PC-3 (cell line): ENCODE measurements at regions of chr2 and their contacts with region 1.

Region 1: GRCh38 chr2:109173311-109174171 is 44.5 kb downstream of the SH3RF3 start:
- DNase-seq: no peak
- ATAC-seq: no peak
- H3K4me3 ChIP-seq: no peak overlapping the region
- H3K27ac ChIP-seq: peak overlapping the region; percentile 78; the same call in 1 of the 2 replicates
- H3K4me1 ChIP-seq: peaks cover 61% of the 10 kb centered on the region
- H3K27me3 ChIP-seq: no peaks in the 10 kb centered on the region
- CTCF ChIP-seq: no peak

Region 2: DNA sequence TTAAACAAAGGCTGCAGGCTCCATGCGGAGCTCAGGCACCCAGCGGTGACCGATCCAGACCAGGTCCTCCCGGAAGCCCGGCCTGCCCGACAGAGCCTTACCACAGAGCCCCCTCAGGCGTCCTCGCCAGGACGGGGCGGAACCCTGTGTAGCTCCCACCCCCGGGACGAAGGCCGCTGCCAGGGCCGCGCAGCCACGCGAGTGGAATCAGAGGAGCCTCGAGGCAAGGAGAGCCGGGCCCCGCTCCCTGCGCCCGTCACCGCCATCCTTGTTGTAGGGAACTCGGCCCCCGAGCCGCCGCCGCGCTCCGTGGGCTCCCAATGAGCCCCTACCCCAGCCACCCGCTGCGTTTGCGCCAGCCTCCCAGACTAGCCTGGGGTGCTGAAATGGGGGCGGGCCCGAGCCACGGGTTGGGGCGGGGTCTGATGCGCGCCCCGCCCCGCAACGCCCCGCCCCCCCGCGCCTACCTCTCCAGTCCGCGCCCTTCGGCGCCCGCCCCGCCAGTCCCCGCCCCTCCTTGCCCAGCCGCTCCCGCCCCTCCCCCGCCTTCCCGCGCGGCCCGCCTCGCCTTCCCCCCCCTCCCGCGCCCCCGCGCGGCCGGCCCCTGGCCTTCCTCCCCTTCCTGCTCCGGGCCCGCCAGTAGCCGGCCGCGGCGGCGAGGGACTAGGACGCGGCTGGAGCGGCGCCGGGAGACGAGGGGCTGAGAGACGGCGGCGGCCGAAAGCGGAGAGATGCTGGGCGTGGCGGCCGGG is 639.5 kb before region 1 on chr2 and contains the start of gene LIMS1:
- CTCF ChIA-PET with region 1: no interaction called
- POLR2A ChIA-PET with region 1: no interaction called
- intact Hi-C with region 1: no loop called
- DNase-seq: peak; percentile 91
- ATAC-seq: peak; percentile 81
- H3K4me3 ChIP-seq: peak within 1 kb of the TSS; percentile 85
- H3K27ac ChIP-seq: peak within 1 kb of the TSS; percentile 86
- H3K4me1 ChIP-seq: peaks cover 31% of the 10 kb centered on the region
- H3K27me3 ChIP-seq: no peaks in the 10 kb centered on the region
- CTCF ChIP-seq: no peak
- total RNA-seq, gene LIMS1: 58.9 and 62.7 TPM in 2 replicates

Region 3: GRCh38 chr2:109123586-109124201 is 49.8 kb before region 1 on chr2:
- CTCF ChIA-PET with region 1: no interaction called
- POLR2A ChIA-PET with region 1: no interaction called
- intact Hi-C with region 1: no loop called
- DNase-seq: no peak
- ATAC-seq: no peak
- H3K4me3 ChIP-seq: no peak overlapping the region
- H3K27ac ChIP-seq: no peak overlapping the region
- H3K4me1 ChIP-seq: peaks cover 45% of the 10 kb centered on the region
- H3K27me3 ChIP-seq: no peaks in the 10 kb centered on the region
- CTCF ChIP-seq: no peak

Region 4: DNA sequence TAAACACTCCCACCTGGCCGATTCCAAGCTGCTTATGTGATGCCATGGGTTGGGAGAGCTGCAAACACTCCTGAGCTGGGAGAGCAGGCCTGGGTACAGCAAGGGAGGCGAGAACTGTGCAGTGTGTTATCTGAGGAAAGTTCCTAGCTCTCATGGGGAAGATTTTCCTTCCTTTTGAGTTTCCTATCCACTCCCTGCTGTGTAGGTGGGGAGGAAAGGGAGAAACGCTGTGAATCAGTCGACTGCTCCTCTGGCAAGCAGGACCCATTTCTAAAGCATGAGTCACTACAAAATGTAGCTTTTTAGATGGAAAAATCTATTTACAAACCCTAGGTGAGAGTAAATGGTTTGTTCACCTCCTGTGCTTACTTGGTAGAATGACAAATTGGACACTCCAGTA is 35.9 kb after region 1 on chr2:
- CTCF ChIA-PET with region 1: no interaction called
- POLR2A ChIA-PET with region 1: no interaction called
- intact Hi-C with region 1: loop called (anchors 1 kb)
- DNase-seq: peak; percentile 92
- ATAC-seq: peak; percentile 69
- H3K4me3 ChIP-seq: peak overlapping the region; percentile 49
- H3K27ac ChIP-seq: peak overlapping the region; percentile 93
- H3K4me1 ChIP-seq: peaks cover 57% of the 10 kb centered on the region
- H3K27me3 ChIP-seq: no peaks in the 10 kb centered on the region
- CTCF ChIP-seq: no peak

Region 5: GRCh38 chr2:109238580-109238979 is 65.0 kb after region 1 on chr2:
- CTCF ChIA-PET with region 1: no interaction called
- POLR2A ChIA-PET with region 1: no interaction called
- intact Hi-C with region 1: loop called (anchors 2 kb)
- DNase-seq: peak; percentile 33
- ATAC-seq: peak; percentile 5; the same call in 1 of the 2 replicates
- H3K4me3 ChIP-seq: no peak overlapping the region
- H3K27ac ChIP-seq: peak overlapping the region; percentile 68
- H3K4me1 ChIP-seq: peaks cover 70% of the 10 kb centered on the region
- H3K27me3 ChIP-seq: no peaks in the 10 kb centered on the region
- CTCF ChIP-seq: no peak